ENCODE measurements at regions of chr2 and their contacts with region 1.

Region 1: DNA sequence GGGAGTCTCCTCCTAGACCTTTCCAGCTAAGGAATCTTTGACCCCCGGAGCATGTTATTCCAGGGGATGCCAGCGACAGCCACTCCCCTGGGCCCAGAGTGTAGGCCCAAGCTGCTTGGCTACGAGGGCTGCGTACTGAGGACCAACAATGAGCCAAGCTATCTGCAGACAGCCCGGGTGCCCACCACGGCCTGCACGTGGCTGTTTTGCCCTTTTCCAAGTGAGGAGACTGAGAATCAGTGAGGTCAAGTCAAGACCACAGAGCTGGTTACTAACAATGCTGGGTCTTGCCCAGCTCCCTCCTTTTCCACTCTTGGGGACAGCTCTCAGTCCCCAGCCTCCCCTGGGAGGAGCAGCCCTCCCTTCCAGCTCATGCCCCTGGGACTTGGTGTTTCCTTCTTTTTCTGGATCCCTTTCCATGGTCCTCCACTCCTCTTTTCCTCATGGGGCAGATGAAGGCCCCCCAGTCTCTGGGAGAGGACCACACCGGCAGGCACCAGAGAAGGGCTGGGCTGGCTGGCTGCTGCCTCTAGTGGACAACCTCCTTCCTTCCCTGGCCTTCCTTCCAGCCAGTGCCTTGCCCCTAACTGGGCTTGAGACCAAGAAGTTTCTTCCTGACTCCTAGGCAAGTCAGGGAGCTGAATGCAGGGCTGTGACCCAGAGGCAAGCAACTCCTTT is 550 bp upstream of the MALL start:
- DNase-seq: peak; percentile 73 to 83
- ATAC-seq: peak; percentile 73 to 83
- H3K4me3 ChIP-seq: peak overlapping the region; percentile 90
- H3K27ac ChIP-seq: peak overlapping the region; percentile 96
- H3K4me1 ChIP-seq: peaks cover 17% of the 10 kb centered on the region
- CTCF ChIP-seq: peak; percentile 65
- EP300 ChIP-seq: no peak
- POLR2A ChIP-seq: no peak
- RAD21 ChIP-seq: peak; percentile 58 to 64

Region 2: GRCh38 chr2:109380502-109381326 is 735.5 kb before region 1 on chr2:
- CTCF ChIA-PET with region 1: no interaction called
- POLR2A ChIA-PET with region 1: no interaction called
- DNase-seq: no peak
- ATAC-seq: no peak
- H3K4me3 ChIP-seq: no peak overlapping the region
- H3K27ac ChIP-seq: no peak overlapping the region
- H3K4me1 ChIP-seq: no peaks in the 10 kb centered on the region
- CTCF ChIP-seq: no peak
- EP300 ChIP-seq: no peak
- POLR2A ChIP-seq: no peak
- RAD21 ChIP-seq: no peak

Region 3: GRCh38 chr2:110101280-110101844 is 14.8 kb before region 1 on chr2:
- CTCF ChIA-PET with region 1: interaction called, 39 read pairs
- POLR2A ChIA-PET with region 1: interaction called, 56 read pairs
- DNase-seq: peak; percentile 68 to 99
- ATAC-seq: peak; percentile 79 to 82
- H3K4me3 ChIP-seq: no peak overlapping the region
- H3K27ac ChIP-seq: peak overlapping the region; percentile 98 to 100
- H3K4me1 ChIP-seq: peaks cover 82% of the 10 kb centered on the region
- CTCF ChIP-seq: no peak
- EP300 ChIP-seq: peak; percentile 84 to 94; a peak in 4 of 5 replicates
- POLR2A ChIP-seq: peak; percentile 28; the same call in 1 of the 2 replicates
- RAD21 ChIP-seq: peak; percentile 3 to 44; a peak in 3 of 5 replicates

Region 4: DNA sequence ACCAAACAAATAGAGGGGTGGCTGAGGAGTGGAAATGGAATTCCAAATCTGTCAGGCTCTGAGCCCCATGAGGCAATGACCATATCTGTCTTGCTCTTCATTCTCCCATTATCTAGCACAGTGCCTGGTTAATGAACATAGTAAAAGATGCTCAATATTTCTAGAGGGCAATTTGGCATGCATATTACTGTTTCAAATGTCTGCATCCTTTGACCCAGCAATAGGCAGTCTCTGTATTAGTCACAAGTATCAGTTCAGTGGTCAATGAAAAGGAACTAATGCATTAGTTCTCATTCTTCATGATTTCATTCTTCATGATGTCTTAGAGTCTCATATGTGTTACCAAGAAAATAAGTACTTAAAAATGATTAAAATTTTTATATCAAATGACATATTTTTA is 27.8 kb after region 1 on chr2:
- CTCF ChIA-PET with region 1: interaction called, 21 read pairs
- POLR2A ChIA-PET with region 1: no interaction called
- DNase-seq: no peak
- ATAC-seq: no peak
- H3K4me3 ChIP-seq: no peak overlapping the region
- H3K27ac ChIP-seq: 0 out of 6 replicates have a peak overlapping the region, but pooled peaks of 1 of the 2 experiments have one; percentile 8
- H3K4me1 ChIP-seq: peaks cover 9% of the 10 kb centered on the region; the same call in 2 of the 3 replicates
- CTCF ChIP-seq: no peak
- EP300 ChIP-seq: no peak
- POLR2A ChIP-seq: no peak
- RAD21 ChIP-seq: no peak

Region 5: DNA sequence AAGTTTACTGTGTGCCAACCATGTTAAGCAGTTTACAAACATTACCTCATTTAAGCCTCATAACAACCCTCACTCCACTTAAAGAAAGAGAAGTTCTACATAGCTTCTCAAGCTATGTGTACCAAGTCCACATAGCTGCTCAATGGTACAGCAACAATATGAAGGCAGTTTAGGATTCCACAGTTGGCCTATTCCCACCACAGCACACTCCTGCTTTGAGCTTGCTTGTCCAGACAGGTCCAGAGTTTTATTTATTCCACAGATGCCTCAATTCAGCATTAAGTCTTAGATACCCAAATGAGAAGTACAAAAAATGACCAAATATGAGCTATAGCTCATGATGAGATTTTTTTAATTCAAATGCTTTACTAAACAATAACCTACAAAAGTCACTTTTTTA is 63.9 kb after region 1 on chr2:
- CTCF ChIA-PET with region 1: interaction called, 14 read pairs
- POLR2A ChIA-PET with region 1: no interaction called
- DNase-seq: no peak
- ATAC-seq: no peak
- H3K4me3 ChIP-seq: no peak overlapping the region
- H3K27ac ChIP-seq: no peak overlapping the region
- H3K4me1 ChIP-seq: no peaks in the 10 kb centered on the region
- CTCF ChIP-seq: no peak
- EP300 ChIP-seq: no peak
- POLR2A ChIP-seq: no peak
- RAD21 ChIP-seq: no peak

Region 6: GRCh38 chr2:110198016-110198415 is 81.8 kb after region 1 on chr2:
- CTCF ChIA-PET with region 1: no interaction called
- POLR2A ChIA-PET with region 1: no interaction called
- DNase-seq: no peak
- ATAC-seq: no peak
- H3K4me3 ChIP-seq: no peak overlapping the region
- H3K27ac ChIP-seq: no peak overlapping the region
- H3K4me1 ChIP-seq: no peaks in the 10 kb centered on the region
- CTCF ChIP-seq: no peak
- EP300 ChIP-seq: no peak
- POLR2A ChIP-seq: no peak
- RAD21 ChIP-seq: no peak